ENCODE measurements at regions of chr2 and their contacts with region 1.

Region 1: GRCh38 chr2:84865181-84865783 is 15.6 kb downstream of the TRABD2A start:
- DNase-seq: peak; percentile 34
- H3K4me3 ChIP-seq: no peak overlapping the region
- H3K27ac ChIP-seq: no peak overlapping the region
- H3K4me1 ChIP-seq: no peaks in the 10 kb centered on the region
- H3K27me3 ChIP-seq: no peaks in the 10 kb centered on the region
- CTCF ChIP-seq: peak; percentile 40 to 41

Region 2: GRCh38 chr2:84495539-84496146 is 369.6 kb before region 1 on chr2:
- CTCF ChIA-PET with region 1: no interaction called
- dilution Hi-C with region 1: loop called (anchors 25 kb)
- in situ Hi-C with region 1: loop called in 1 of 2 experiments (anchors 10 kb)
- intact Hi-C with region 1: loop called (anchors 1 kb)
- DNase-seq: peak; percentile 39
- H3K4me3 ChIP-seq: no peak overlapping the region
- H3K27ac ChIP-seq: no peak overlapping the region
- H3K4me1 ChIP-seq: peaks cover 2% of the 10 kb centered on the region
- H3K27me3 ChIP-seq: no peaks in the 10 kb centered on the region
- CTCF ChIP-seq: peak; percentile 49 to 56

Measured in mammary epithelial cell (primary cell).